Pancreas (tissue), 10 donors: ENCODE measurements at regions of chr1 and their contacts with region 1.

Region 1: DNA sequence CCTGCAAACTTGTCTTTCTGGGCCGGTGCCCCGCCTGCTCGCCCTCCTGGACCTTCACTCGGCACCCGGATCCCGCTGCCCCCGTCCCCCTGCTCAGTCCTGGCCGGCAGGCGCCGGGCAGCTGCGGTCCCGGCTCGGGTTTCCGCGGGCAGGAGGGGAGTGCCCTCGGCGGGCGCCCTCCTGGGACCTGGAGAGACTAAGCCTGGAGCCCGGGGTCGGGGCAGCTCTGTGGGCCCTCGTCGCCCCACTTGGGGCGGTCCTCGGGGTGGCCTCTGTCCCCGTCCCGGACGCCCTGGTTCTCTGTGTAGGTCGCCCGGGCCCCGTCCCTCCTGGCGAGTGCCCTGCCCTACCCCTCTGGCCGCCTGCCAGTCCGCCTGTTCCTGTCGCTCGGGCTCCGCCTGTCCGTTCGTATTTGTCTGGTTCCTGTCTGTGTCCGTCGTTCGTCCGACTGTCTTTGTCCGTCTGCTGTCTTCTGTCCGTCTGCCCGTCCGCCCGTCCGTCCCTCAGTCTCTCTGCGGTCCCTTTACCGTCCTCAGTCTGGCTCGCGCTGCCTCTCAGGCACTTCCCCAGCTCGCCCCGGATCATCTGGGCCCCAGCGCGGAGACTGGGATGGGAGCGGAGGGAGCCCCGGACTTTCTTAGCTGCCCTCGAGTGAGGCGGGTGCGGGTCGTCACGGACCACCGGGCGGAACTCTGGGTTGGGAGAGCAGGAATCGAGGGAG is 552 bp downstream of the SERINC2 start:
- DNase-seq: peak; percentile 70 to 95 (median 86)
- ATAC-seq: peak; percentile 74 to 85 (median 76)
- H3K4me3 ChIP-seq: peak overlapping the region; percentile 80 to 90 (median 84)
- H3K27ac ChIP-seq: peak overlapping the region; percentile 68 to 83 (median 82)
- H3K4me1 ChIP-seq: peaks cover 0 to 9% (median 0%) of the 10 kb centered on the region in 3 donors
- H3K27me3 ChIP-seq: no peaks in the 10 kb centered on the region
- CTCF ChIP-seq: no peak

Region 2: DNA sequence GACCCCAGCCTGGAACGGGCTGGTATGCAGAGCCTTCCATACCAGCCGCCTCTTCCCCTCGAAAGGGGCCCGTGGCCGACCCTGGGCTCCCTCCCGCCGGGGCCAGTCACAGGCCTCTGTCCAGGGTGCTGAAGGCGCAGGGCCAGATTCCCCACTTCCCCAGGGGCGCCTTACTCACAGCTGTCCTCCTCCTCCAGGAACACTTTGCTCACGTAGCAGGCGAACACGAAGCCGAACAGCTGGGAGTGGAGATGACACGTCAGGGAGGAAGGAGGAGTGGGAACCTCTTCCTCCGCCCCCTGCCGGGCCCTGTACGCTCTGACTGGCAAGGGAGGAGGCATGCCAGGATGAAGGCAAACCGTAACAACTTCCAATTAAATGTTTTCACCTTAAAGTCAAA is 231.2 kb before region 1 on chr1:
- intact Hi-C with region 1: loop called in 2 of 3 experiments (anchors 10 kb)
- DNase-seq: peak; percentile 57 to 89 (median 74)
- ATAC-seq: peak; percentile 86 to 91 (median 89)
- H3K4me3 ChIP-seq: peak overlapping the region in 3 of 4 donors; percentile 8 to 39 (median 12)
- H3K27ac ChIP-seq: no peak overlapping the region
- H3K4me1 ChIP-seq: peaks cover 0 to 9% (median 7%) of the 10 kb centered on the region in 3 donors
- H3K27me3 ChIP-seq: peaks cover 0 to 6% (median 0%) of the 10 kb centered on the region in 4 donors
- CTCF ChIP-seq: no peak

Region 3: DNA sequence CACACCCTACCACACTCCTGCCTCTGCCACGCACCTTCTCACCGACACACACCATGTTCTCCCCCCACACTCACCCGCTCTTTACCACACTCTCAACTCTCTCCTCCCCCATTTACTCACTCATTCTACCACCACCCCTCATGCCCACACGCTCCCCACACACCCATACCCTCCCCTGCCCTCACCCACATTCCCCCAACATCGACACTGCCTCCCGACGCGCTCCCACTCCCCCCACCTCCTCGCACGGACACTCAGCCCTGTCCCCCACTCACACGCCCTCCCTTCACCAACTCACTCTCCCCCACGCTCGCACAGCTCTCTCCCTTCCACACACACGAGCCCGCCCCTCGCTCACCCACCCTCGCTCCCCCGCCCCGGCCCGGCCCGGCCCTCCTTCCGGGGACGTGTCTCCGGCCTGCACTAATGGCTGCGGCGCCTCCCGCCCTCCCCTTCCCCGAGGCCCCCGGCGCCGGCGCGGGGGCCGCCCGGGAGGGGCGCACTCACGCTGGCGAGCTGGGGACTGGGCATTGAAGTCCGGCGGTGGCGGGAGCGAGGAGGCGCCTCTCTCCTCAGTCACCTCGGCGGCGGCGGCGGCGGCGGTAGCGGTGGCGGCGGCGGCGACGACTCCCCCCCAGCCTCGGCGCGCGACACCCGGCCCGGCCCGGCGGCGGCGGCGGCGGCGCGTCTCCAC is 524.1 kb after region 1 on chr1:
- intact Hi-C with region 1: no loop called
- DNase-seq: peak; percentile 78 to 91 (median 83)
- ATAC-seq: peak; percentile 45 to 68 (median 62)
- H3K4me3 ChIP-seq: peak overlapping the region; percentile 32 to 62 (median 60)
- H3K27ac ChIP-seq: peak overlapping the region; percentile 83 to 93 (median 88)
- H3K4me1 ChIP-seq: peaks cover 27 to 58% (median 54%) of the 10 kb centered on the region in 3 donors
- H3K27me3 ChIP-seq: no peaks in the 10 kb centered on the region
- CTCF ChIP-seq: no peak